ENCODE measurements at regions of chr3 and their contacts with region 1.

Region 1: GRCh38 chr3:72447059-72447946 is 400.9 kb downstream of the SHQ1 start:
- DNase-seq: peak; percentile 87
- H3K4me3 Mint-ChIP-seq: peak overlapping the region; percentile 88
- H3K27ac Mint-ChIP-seq: no peak overlapping the region
- H3K4me1 Mint-ChIP-seq: peaks cover 33% of the 10 kb centered on the region
- H3K27me3 Mint-ChIP-seq: peaks cover 21% of the 10 kb centered on the region
- CTCF ChIP-seq: no peak

Region 2: GRCh38 chr3:71955240-71956068 is 491.8 kb before region 1 on chr3:
- CTCF ChIA-PET with region 1: interaction called, 3 read pairs
- POLR2A ChIA-PET with region 1: no interaction called
- intact Hi-C with region 1: loop called (anchors 5 kb)
- DNase-seq: peak; percentile 78
- H3K4me3 Mint-ChIP-seq: no peak overlapping the region
- H3K27ac Mint-ChIP-seq: no peak overlapping the region
- H3K4me1 Mint-ChIP-seq: no peaks in the 10 kb centered on the region
- H3K27me3 Mint-ChIP-seq: peaks cover 22% of the 10 kb centered on the region
- CTCF ChIP-seq: peak; percentile 56

Region 3: GRCh38 chr3:72270072-72270681 is 177.1 kb before region 1 on chr3:
- CTCF ChIA-PET with region 1: no interaction called
- POLR2A ChIA-PET with region 1: interaction called, 3 read pairs
- intact Hi-C with region 1: loop called (anchors 5 kb)
- DNase-seq: peak; percentile 93
- H3K4me3 Mint-ChIP-seq: peak overlapping the region; percentile 15
- H3K27ac Mint-ChIP-seq: peak overlapping the region; percentile 88
- H3K4me1 Mint-ChIP-seq: peaks cover 32% of the 10 kb centered on the region
- H3K27me3 Mint-ChIP-seq: peaks cover 7% of the 10 kb centered on the region
- CTCF ChIP-seq: no peak

Region 4: GRCh38 chr3:72339116-72340030 is 107.9 kb before region 1 on chr3:
- CTCF ChIA-PET with region 1: interaction called, 4 read pairs
- POLR2A ChIA-PET with region 1: no interaction called
- intact Hi-C with region 1: loop called (anchors 2 kb)
- DNase-seq: peak; percentile 93
- H3K4me3 Mint-ChIP-seq: no peak overlapping the region
- H3K27ac Mint-ChIP-seq: no peak overlapping the region
- H3K4me1 Mint-ChIP-seq: peaks cover 22% of the 10 kb centered on the region
- H3K27me3 Mint-ChIP-seq: no peaks in the 10 kb centered on the region
- CTCF ChIP-seq: no peak

Region 5: DNA sequence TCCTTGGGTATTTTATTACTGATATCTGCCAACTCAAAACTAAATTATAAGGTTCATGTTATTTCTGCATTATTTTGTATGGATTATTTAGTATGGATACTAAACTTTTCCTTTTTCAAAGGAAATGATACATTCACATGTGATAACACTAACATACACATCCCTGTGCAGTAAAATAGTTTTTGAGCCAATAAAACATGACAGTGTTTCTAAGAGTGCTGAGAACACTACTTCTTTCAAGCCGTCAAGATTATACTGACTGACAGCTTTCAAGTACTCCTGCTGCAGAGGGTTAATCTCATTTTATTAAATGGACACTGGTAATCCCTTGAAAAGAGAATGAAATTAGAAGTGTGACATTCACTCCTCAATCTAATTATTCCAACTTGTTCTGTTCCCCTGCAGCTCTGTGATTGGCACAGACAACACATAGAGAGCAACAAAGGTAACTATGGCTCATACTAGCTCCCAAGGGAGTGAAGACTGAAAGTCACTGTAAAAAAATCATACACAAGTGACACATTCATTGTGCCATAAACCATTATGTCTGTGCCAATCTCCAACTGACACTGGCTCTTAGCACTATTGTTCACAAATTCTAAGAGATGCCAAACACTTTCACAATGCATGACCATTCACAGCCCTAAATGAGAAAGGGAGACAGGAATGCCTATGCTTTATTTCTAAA is 67.7 kb before region 1 on chr3:
- CTCF ChIA-PET with region 1: no interaction called
- POLR2A ChIA-PET with region 1: interaction called, 4 read pairs
- intact Hi-C with region 1: loop called (anchors 2 kb)
- DNase-seq: peak; percentile 45
- H3K4me3 Mint-ChIP-seq: no peak overlapping the region
- H3K27ac Mint-ChIP-seq: peak overlapping the region; percentile 75
- H3K4me1 Mint-ChIP-seq: peaks cover 35% of the 10 kb centered on the region
- H3K27me3 Mint-ChIP-seq: no peaks in the 10 kb centered on the region
- CTCF ChIP-seq: no peak

Region 6: DNA sequence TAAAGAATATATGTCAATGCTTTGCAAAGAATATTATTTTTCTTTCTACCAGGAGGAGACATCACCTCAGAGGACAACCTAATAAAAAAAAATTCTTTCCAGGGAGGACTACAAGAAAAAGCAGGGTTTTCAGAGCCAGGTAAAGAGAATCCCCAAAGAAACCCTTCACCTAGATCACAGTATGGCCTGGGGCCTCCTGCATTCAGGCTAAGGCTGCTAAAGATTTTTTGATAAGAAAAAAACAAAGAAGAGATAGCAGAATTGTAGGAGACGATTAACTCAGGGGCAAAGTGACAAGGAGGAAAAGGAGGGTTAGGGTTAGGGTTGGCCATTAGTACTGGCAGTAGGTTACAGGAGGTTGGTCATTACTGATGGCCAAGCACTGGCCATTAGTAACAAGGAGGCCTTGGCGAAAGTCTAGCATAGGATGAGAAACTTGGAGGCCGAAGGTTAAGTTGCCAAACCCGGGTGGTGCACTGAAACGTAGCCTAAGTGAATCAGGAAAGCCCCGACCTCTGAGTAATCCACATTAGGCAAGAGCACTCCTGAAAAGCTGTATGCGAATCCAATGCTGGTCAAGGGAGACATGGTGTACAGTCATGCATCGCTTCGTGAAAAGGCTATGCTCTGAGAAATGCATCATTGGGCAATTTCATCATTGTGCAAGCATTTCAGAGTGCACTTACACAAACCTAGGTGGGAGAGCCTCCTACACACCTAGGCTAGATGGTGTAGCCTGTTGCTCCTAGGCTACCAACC is 178.1 kb after region 1 on chr3:
- CTCF ChIA-PET with region 1: interaction called, 3 read pairs
- POLR2A ChIA-PET with region 1: interaction called, 3 read pairs
- intact Hi-C with region 1: loop called (anchors 1 kb)
- DNase-seq: peak; percentile 100
- H3K4me3 Mint-ChIP-seq: no peak overlapping the region
- H3K27ac Mint-ChIP-seq: peak overlapping the region; percentile 82
- H3K4me1 Mint-ChIP-seq: peaks cover 43% of the 10 kb centered on the region
- H3K27me3 Mint-ChIP-seq: no peaks in the 10 kb centered on the region
- CTCF ChIP-seq: no peak

Region 7: GRCh38 chr3:72722930-72723726 is 275.8 kb after region 1 on chr3:
- CTCF ChIA-PET with region 1: no interaction called
- POLR2A ChIA-PET with region 1: interaction called, 11 read pairs
- intact Hi-C with region 1: no loop called
- DNase-seq: peak; percentile 85
- H3K4me3 Mint-ChIP-seq: peak overlapping the region; percentile 44
- H3K27ac Mint-ChIP-seq: peak overlapping the region; percentile 97
- H3K4me1 Mint-ChIP-seq: peaks cover 24% of the 10 kb centered on the region
- H3K27me3 Mint-ChIP-seq: no peaks in the 10 kb centered on the region
- CTCF ChIP-seq: no peak

Region 8: GRCh38 chr3:72982609-72983366 is 535.5 kb after region 1 on chr3:
- CTCF ChIA-PET with region 1: no interaction called
- POLR2A ChIA-PET with region 1: no interaction called
- intact Hi-C with region 1: no loop called
- DNase-seq: no peak
- H3K4me3 Mint-ChIP-seq: no peak overlapping the region
- H3K27ac Mint-ChIP-seq: no peak overlapping the region
- H3K4me1 Mint-ChIP-seq: no peaks in the 10 kb centered on the region
- H3K27me3 Mint-ChIP-seq: no peaks in the 10 kb centered on the region
- CTCF ChIP-seq: no peak

Measured in MCF 10A (cell line).